ENCODE measurements at regions of chr3 and their contacts with region 1.

Region 1: GRCh38 chr3:143885780-143886427 is 37.6 kb upstream of the SLC9A9 start:
- DNase-seq: peak; percentile 15
- ATAC-seq: peak; percentile 97
- H3K4me3 ChIP-seq: no peak overlapping the region
- H3K27ac ChIP-seq: no peak overlapping the region
- H3K4me1 ChIP-seq: no peaks in the 10 kb centered on the region
- H3K27me3 ChIP-seq: no peaks in the 10 kb centered on the region
- CTCF ChIP-seq: peak; percentile 77 to 82 (median 77)
- EP300 ChIP-seq: no peak
- POLR2A ChIP-seq: no peak
- RAD21 ChIP-seq: peak; percentile 82

Region 2: GRCh38 chr3:143526011-143526545 is 359.8 kb before region 1 on chr3:
- CTCF ChIA-PET with region 1: no interaction called
- POLR2A ChIA-PET with region 1: no interaction called
- RAD21 ChIA-PET with region 1: no interaction called
- SMC1A ChIA-PET with region 1: no interaction called
- in situ Hi-C with region 1: no loop called
- intact Hi-C with region 1: no loop called
- DNase-seq: no peak
- ATAC-seq: no peak
- H3K4me3 ChIP-seq: no peak overlapping the region
- H3K27ac ChIP-seq: no peak overlapping the region
- H3K4me1 ChIP-seq: peaks cover 12% of the 10 kb centered on the region
- H3K27me3 ChIP-seq: no peaks in the 10 kb centered on the region
- CTCF ChIP-seq: no peak
- EP300 ChIP-seq: no peak
- POLR2A ChIP-seq: no peak
- RAD21 ChIP-seq: no peak

Region 3: GRCh38 chr3:143726727-143727126 is 159.2 kb before region 1 on chr3:
- CTCF ChIA-PET with region 1: no interaction called
- POLR2A ChIA-PET with region 1: no interaction called
- RAD21 ChIA-PET with region 1: no interaction called
- SMC1A ChIA-PET with region 1: no interaction called
- in situ Hi-C with region 1: no loop called
- intact Hi-C with region 1: no loop called
- DNase-seq: no peak
- ATAC-seq: no peak
- H3K4me3 ChIP-seq: no peak overlapping the region
- H3K27ac ChIP-seq: no peak overlapping the region
- H3K4me1 ChIP-seq: no peaks in the 10 kb centered on the region
- H3K27me3 ChIP-seq: no peaks in the 10 kb centered on the region
- CTCF ChIP-seq: no peak
- EP300 ChIP-seq: no peak
- POLR2A ChIP-seq: no peak
- RAD21 ChIP-seq: no peak

Region 4: DNA sequence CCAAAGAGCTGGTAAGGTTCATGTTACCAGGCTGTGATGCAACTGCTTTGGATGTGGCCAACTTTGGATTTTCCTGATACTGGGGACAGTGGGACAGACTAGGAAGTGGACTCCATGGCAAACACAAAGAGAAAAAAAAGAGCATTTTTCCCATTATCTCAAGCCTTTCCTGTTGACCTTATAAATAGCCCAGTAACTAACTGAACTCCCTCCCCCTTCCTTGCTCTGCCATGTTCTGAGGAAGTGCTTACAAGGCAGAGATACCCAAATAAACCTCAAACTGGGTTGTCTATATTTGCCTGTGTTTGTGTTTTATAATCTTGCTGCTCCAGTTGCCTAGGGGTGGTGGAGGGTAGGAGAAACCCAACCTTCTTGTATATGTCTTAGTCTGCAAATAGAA is 10.4 kb before region 1 on chr3:
- CTCF ChIA-PET with region 1: interaction called, 16 read pairs
- POLR2A ChIA-PET with region 1: no interaction called
- RAD21 ChIA-PET with region 1: interaction called, 3 read pairs
- SMC1A ChIA-PET with region 1: interaction called, 5 read pairs
- in situ Hi-C with region 1: no loop called
- intact Hi-C with region 1: no loop called
- DNase-seq: no peak
- ATAC-seq: no peak
- H3K4me3 ChIP-seq: no peak overlapping the region
- H3K27ac ChIP-seq: no peak overlapping the region
- H3K4me1 ChIP-seq: no peaks in the 10 kb centered on the region
- H3K27me3 ChIP-seq: no peaks in the 10 kb centered on the region
- CTCF ChIP-seq: no peak
- EP300 ChIP-seq: no peak
- POLR2A ChIP-seq: no peak
- RAD21 ChIP-seq: no peak

Region 5: DNA sequence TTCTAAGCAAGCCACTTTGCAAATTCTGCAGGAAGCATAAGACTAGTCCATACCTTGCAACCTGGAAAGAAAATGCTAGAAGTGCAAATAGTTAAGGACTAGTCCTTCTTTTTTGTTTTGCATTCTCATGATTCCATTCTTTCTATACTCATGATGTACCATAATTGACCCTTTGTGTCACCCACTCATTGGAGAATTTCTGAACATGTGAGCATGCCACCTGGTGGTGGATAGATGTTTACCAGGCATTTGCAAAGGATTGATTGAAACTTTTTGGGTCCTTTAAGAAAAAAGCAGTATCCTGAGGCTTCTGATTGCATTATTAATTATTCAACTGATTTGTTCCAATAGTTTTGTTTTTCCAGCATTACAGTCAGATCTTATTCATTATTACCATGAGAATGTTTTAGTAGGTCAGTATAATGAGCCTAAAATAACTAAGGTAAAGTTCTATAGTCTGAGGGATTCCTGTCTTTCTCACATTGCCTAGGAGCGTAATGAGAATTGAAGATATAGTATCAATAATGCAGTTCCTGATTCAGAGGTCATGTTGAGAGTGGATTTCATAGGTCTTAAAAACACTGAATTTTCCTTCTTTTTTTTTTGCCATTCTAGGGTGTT is 65.6 kb after region 1 on chr3:
- CTCF ChIA-PET with region 1: interaction called, 25 read pairs
- POLR2A ChIA-PET with region 1: no interaction called
- RAD21 ChIA-PET with region 1: interaction called, 7 read pairs
- SMC1A ChIA-PET with region 1: interaction called, 6 read pairs
- in situ Hi-C with region 1: loop called (anchors 10 kb)
- intact Hi-C with region 1: loop called (anchors 1 kb)
- DNase-seq: no peak
- ATAC-seq: peak; percentile 78
- H3K4me3 ChIP-seq: no peak overlapping the region
- H3K27ac ChIP-seq: no peak overlapping the region
- H3K4me1 ChIP-seq: no peaks in the 10 kb centered on the region
- H3K27me3 ChIP-seq: no peaks in the 10 kb centered on the region
- CTCF ChIP-seq: peak; percentile 63 to 74 (median 65)
- EP300 ChIP-seq: no peak
- POLR2A ChIP-seq: no peak
- RAD21 ChIP-seq: peak; percentile 77